ENCODE measurements at regions of chr10 and their contacts with region 1.

Region 1: GRCh38 chr10:11881477-11882417 is 58.6 kb downstream of the PROSER2 start:
- DNase-seq: peak; percentile 79 to 85
- H3K4me3 ChIP-seq: no peak overlapping the region
- H3K4me3 Mint-ChIP-seq: no peak overlapping the region
- H3K27ac Mint-ChIP-seq: peak overlapping the region; percentile 97
- H3K4me1 ChIP-seq: peaks cover 40% of the 10 kb centered on the region
- H3K4me1 Mint-ChIP-seq: peaks cover 29% of the 10 kb centered on the region
- H3K27me3 ChIP-seq: no peaks in the 10 kb centered on the region
- H3K27me3 Mint-ChIP-seq: no peaks in the 10 kb centered on the region
- CTCF ChIP-seq: peak; percentile 43 to 53

Region 2: GRCh38 chr10:11898372-11899066 is 16.8 kb after region 1 on chr10:
- CTCF ChIA-PET with region 1: interaction called, 3 read pairs
- POLR2A ChIA-PET with region 1: interaction called, 3 read pairs
- intact Hi-C with region 1: loop called (anchors 1 kb)
- DNase-seq: peak; percentile 78 to 89
- H3K4me3 ChIP-seq: no peak overlapping the region
- H3K4me3 Mint-ChIP-seq: no peak overlapping the region
- H3K27ac Mint-ChIP-seq: peak overlapping the region; percentile 86
- H3K4me1 ChIP-seq: peaks cover 25% of the 10 kb centered on the region
- H3K4me1 Mint-ChIP-seq: peaks cover 39% of the 10 kb centered on the region
- H3K27me3 ChIP-seq: no peaks in the 10 kb centered on the region
- H3K27me3 Mint-ChIP-seq: no peaks in the 10 kb centered on the region
- CTCF ChIP-seq: no peak

Region 3: GRCh38 chr10:11949152-11949551 is 67.4 kb after region 1 on chr10:
- CTCF ChIA-PET with region 1: interaction called, 13 read pairs
- POLR2A ChIA-PET with region 1: interaction called, 3 read pairs
- intact Hi-C with region 1: no loop called
- DNase-seq: no peak
- H3K4me3 ChIP-seq: no peak overlapping the region
- H3K4me3 Mint-ChIP-seq: no peak overlapping the region
- H3K27ac Mint-ChIP-seq: no peak overlapping the region
- H3K4me1 ChIP-seq: peaks cover 11% of the 10 kb centered on the region
- H3K4me1 Mint-ChIP-seq: peaks cover 6% of the 10 kb centered on the region
- H3K27me3 ChIP-seq: no peaks in the 10 kb centered on the region
- H3K27me3 Mint-ChIP-seq: no peaks in the 10 kb centered on the region
- CTCF ChIP-seq: no peak

Region 4: DNA sequence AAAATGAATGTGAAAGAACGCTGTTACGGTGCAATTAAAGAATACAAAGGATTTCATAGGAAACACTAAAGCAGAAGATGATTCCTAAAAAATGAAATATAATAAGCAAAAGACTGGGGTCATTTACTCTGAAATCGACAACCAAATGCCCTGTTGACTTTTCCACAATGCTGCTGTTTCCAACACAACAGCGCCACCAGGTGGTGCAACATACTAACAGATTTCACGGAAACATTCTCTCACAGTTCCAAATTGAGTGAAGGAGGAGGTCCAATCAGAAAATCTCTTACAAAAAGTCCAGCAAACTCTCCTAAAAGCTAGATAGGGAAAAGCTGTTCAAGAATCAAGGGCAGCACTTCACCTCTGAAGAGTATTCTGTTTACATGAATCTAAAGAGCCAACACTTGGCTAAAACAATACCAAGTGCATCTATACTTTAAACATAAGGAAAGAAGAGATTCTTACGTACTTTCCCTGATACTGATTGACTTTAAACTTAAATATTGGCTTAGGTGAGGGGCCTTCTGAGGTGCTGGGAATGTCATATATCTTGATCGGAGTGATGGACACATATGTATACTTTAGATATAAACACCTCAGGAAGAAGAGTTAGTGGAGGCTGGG is 105.0 kb after region 1 on chr10:
- CTCF ChIA-PET with region 1: interaction called, 11 read pairs
- POLR2A ChIA-PET with region 1: no interaction called
- intact Hi-C with region 1: no loop called
- DNase-seq: peak; percentile 82 to 91
- H3K4me3 ChIP-seq: no peak overlapping the region
- H3K4me3 Mint-ChIP-seq: peak overlapping the region; percentile 20
- H3K27ac Mint-ChIP-seq: peak overlapping the region; percentile 20
- H3K4me1 ChIP-seq: peaks cover 11% of the 10 kb centered on the region
- H3K4me1 Mint-ChIP-seq: peaks cover 12% of the 10 kb centered on the region
- H3K27me3 ChIP-seq: no peaks in the 10 kb centered on the region
- H3K27me3 Mint-ChIP-seq: no peaks in the 10 kb centered on the region
- CTCF ChIP-seq: peak; percentile 96

Measured in Caco-2 (cell line).